ENCODE measurements at regions of chr9 and their contacts with region 1.

Region 1: DNA sequence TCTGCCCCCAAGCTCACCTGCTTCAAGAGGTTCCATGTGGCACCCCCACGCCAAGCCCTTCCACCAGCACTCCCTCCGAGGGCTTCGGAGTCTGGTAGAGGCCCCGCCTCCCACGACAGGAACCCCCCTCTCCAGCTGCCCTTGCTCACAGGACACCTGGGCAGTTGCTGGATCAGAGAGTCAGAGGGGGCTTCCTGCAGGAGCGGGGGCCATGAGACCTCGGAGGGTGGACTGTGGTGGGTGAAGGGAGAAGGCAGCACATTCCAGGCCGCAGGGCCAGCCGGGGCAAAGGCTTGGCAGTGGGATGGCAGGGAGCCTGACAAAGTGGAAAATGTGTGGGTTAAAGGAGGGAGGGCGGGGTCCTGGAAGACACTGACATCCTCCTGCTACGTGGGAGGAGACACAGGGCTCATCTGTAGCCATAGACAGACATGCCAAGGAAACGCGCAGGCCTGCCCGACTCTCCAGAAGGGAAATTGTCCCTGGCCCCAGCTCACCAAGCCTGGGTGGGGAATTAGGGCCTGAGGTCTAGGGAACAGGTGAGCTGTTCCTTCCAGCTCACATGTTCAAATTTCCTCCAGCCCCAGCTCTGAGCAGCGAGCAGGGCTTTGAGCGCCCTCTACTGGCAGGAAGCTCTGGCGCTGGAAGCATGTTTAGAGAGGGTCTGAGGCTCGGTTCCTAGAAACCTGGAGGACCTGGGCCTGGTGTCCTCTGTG is 74.2 kb downstream of the NTNG2 start:
- DNase-seq: peak; percentile 69 to 87
- ATAC-seq: peak; percentile 47 to 79 (median 66)
- H3K4me3 ChIP-seq: no peak overlapping the region
- H3K27ac ChIP-seq: no peak overlapping the region
- H3K4me1 ChIP-seq: no peaks in the 10 kb centered on the region
- H3K27me3 ChIP-seq: peaks cover 0 to 54% (median 12%) of the 10 kb centered on the region in 3 donors
- CTCF ChIP-seq: peak; percentile 95

Region 2: DNA sequence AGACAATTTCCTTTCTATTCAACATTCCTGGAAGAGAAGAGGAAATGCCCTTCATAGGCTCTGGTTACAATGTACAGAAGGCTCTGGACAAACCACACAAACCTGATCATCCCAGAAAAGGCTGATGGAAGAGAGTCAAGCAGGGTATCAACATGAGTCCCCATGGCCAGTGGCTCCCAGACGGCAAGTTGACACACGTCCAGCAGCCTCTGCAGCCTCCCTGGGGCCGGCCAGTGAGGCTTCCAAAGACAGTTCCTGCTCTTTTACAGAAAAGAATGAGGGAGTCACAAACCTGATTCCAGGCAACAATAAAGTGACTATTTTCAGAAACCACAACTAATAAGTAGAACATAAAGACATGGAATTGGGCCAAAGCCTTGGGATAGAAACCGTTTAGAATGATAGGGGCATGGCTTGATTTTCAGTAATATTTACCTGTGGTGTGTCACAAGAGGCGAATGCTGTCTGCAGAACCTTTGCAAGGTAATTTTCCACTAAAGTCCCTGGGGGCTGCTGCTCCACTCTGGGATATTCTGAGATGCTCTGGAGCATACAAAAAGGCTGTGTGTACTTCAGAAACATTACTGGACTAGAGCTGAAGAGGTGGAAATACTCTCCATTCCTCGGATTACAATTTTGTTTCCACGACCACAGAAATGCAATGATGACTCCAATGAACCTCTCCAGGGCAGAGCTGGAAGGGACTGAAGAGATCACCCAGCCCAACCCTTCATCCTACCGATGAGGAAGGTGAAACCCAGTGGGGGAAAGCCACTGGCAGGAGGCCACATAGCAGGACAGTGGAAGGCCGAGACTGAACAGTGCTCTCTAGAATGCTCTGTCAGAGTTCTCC is 166.8 kb before region 1 on chr9:
- intact Hi-C with region 1: loop called in 1 of 2 experiments (anchors 10 kb)
- DNase-seq: no peak
- ATAC-seq: no peak
- H3K4me3 ChIP-seq: no peak overlapping the region
- H3K27ac ChIP-seq: no peak overlapping the region
- H3K4me1 ChIP-seq: peaks cover 38% of the 10 kb centered on the region
- H3K27me3 ChIP-seq: no peaks in the 10 kb centered on the region
- CTCF ChIP-seq: no peak

Region 3: DNA sequence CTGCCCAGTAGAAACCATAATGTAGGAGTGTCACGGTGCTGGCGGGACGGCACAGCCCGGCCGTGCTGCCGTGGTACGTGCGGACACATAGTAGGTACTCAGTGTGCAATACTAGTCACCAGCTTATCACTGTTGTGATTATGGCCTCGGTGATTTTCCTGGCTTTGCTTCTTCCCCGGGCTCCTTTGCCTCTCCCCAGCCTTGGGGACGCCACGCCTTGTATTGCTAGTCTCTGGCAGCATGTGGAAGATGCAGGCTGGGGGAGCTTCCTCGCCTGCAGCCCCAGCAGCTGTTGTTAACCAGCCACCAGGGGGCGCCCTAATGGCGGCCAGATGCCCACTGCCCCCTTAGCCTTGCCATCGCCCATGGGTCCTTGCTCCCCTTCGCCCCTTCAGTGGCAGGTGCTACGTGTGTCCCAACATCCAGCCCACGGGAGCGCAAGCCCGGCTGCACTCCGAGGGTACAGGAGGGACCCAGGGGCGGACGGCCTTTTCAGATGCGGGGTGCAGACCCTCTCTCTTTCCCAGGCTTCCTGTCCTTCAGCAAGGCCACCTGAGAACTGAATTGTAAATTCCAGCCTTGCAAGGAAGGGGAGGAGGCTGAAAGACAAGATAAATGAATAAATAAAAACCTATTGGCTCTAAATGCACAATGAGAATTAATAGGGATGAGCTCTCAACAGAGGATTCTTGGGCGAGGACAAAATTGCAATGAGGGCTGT is 66.3 kb before region 1 on chr9:
- intact Hi-C with region 1: loop called (anchors 1 to 2 kb)
- DNase-seq: peak; percentile 47 to 80
- ATAC-seq: peak; percentile 76 to 90 (median 88)
- H3K4me3 ChIP-seq: no peak overlapping the region
- H3K27ac ChIP-seq: no peak overlapping the region
- H3K4me1 ChIP-seq: peaks cover 2% of the 10 kb centered on the region
- H3K27me3 ChIP-seq: peaks cover 3 to 71% (median 19%) of the 10 kb centered on the region in 3 donors
- CTCF ChIP-seq: peak; percentile 90